B cell (primary cell): ENCODE measurements at regions of chr5 and their contacts with region 1.

Region 1: GRCh38 chr5:132829742-132830435 is 558 bp downstream of the SHROOM1 start:
- DNase-seq: peak; percentile 86
- ATAC-seq: peak; percentile 89
- H3K4me3 ChIP-seq: peak overlapping the region in 4 of 5 experiments; percentile 35 to 73 (median 57)
- H3K4me3 Mint-ChIP-seq: peak overlapping the region; percentile 93
- H3K27ac ChIP-seq: no peak overlapping the region
- H3K27ac Mint-ChIP-seq: peak overlapping the region; percentile 71
- H3K4me1 ChIP-seq: peaks cover 21 to 27% of the 10 kb centered on the region in 2 donors
- H3K4me1 Mint-ChIP-seq: peaks cover 18% of the 10 kb centered on the region
- H3K27me3 ChIP-seq: peaks cover 0 to 54% (median 32%) of the 10 kb centered on the region in 4 experiments
- H3K27me3 Mint-ChIP-seq: peaks cover 26% of the 10 kb centered on the region
- CTCF ChIP-seq: peak; percentile 93

Region 2: DNA sequence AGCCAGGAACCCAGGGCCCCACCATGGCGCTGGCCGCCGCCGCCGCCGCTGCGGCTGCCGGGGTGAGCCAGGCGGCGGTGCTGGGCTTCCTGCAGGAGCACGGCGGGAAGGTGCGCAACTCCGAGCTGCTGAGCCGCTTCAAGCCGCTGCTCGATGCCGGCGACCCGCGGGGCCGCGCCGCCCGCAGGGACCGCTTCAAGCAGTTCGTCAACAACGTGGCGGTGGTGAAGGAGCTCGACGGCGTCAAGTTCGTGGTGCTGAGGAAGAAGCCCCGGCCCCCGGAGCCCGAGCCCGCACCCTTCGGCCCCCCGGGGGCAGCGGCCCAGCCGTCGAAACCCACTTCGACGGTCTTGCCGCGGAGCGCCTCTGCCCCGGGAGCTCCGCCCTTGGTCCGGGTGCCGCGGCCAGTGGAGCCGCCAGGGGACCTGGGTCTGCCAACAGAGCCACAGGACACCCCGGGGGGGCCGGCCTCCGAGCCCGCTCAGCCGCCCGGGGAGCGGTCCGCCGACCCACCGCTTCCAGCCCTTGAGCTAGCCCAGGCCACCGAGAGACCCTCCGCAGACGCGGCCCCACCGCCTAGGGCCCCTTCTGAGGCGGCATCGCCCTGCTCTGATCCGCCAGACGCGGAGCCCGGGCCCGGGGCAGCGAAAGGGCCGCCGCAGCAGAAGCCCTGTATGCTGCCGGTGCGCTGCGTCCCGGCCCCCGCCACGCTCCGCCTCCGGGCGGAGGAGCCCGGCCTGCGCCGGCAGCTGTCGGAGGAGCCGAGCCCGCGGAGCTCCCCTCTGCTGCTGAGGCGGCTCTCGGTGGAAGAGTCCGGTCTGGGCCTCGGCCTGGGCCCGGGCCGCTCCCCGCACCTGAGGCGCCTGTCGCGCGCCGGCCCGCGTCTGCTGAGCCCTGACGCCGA is 16.0 kb before region 1 on chr5:
- CTCF ChIA-PET with region 1: interaction called, 41 read pairs
- POLR2A ChIA-PET with region 1: no interaction called
- intact Hi-C with region 1: no loop called
- DNase-seq: peak; percentile 70
- ATAC-seq: peak; percentile 48
- H3K4me3 ChIP-seq: peak overlapping the region in 3 of 5 experiments; percentile 30 to 50 (median 38)
- H3K4me3 Mint-ChIP-seq: no peak overlapping the region
- H3K27ac ChIP-seq: no peak overlapping the region
- H3K27ac Mint-ChIP-seq: no peak overlapping the region
- H3K4me1 ChIP-seq: peaks cover 10 to 16% of the 10 kb centered on the region in 2 donors
- H3K4me1 Mint-ChIP-seq: peaks cover 11% of the 10 kb centered on the region
- H3K27me3 ChIP-seq: peaks cover 0 to 47% (median 26%) of the 10 kb centered on the region in 4 experiments
- H3K27me3 Mint-ChIP-seq: peaks cover 36% of the 10 kb centered on the region
- CTCF ChIP-seq: no peak

Region 3: DNA sequence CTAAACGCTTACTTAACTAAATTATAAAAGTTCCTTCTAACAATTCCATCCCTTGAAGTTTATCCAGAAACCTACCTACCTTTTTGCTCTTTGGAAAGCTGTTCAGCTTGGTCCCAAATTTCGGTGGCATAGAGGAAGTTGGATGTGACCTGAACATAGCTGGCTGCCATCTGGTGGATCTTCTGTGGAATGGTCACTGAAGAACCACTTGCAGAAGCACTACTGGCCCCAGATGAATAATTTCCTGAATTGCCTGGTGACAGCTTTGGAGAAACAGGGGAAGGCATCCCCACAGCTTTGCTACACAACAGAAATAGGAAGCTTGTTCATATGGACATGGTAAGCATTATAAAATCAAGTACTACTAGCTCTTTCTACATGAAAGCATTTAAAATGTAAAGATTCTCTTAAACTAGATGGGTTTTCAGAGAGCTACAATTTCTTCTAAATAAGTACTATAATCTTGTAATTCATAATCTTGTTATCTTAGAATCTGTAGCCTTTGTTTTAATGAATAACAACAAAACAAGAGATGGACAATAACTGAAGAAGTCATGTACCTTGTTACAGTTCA is 53.5 kb after region 1 on chr5:
- CTCF ChIA-PET with region 1: interaction called, 75 read pairs
- POLR2A ChIA-PET with region 1: interaction called, 3 read pairs
- intact Hi-C with region 1: loop called (anchors 1 kb)
- DNase-seq: peak; percentile 69
- ATAC-seq: peak; percentile 53
- H3K4me3 ChIP-seq: no peak overlapping the region
- H3K4me3 Mint-ChIP-seq: no peak overlapping the region
- H3K27ac ChIP-seq: no peak overlapping the region
- H3K27ac Mint-ChIP-seq: no peak overlapping the region
- H3K4me1 ChIP-seq: no peaks in the 10 kb centered on the region
- H3K4me1 Mint-ChIP-seq: peaks cover 8% of the 10 kb centered on the region
- H3K27me3 ChIP-seq: no peaks in the 10 kb centered on the region
- H3K27me3 Mint-ChIP-seq: no peaks in the 10 kb centered on the region
- CTCF ChIP-seq: peak; percentile 78

Region 4: DNA sequence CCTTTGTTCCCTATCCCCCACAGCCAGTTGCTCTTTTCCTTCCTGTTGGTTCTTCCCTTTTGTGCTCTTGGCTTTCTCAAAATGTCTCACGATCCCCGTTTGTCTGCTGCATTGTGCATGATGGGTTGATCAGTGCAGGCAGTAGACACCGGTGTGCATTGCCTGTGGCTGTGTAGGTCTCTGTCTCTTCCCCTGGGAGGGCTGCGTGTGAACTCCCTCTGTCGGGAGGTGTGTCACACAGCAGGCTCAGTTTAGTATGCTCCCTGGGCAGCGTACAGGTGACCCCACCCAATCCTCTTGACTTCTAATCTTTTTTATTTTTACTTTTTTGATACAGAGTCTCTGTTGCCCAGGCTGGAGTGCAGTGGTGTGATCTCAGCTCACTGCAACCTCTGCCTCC is 517.1 kb after region 1 on chr5:
- CTCF ChIA-PET with region 1: no interaction called
- POLR2A ChIA-PET with region 1: no interaction called
- intact Hi-C with region 1: loop called (anchors 5 kb)
- DNase-seq: no peak
- ATAC-seq: no peak
- H3K4me3 ChIP-seq: no peak overlapping the region
- H3K4me3 Mint-ChIP-seq: no peak overlapping the region
- H3K27ac ChIP-seq: no peak overlapping the region
- H3K27ac Mint-ChIP-seq: no peak overlapping the region
- H3K4me1 ChIP-seq: no peaks in the 10 kb centered on the region
- H3K4me1 Mint-ChIP-seq: no peaks in the 10 kb centered on the region
- H3K27me3 ChIP-seq: peaks cover 0 to 2% (median under 1%) of the 10 kb centered on the region in 4 experiments
- H3K27me3 Mint-ChIP-seq: peaks cover 35% of the 10 kb centered on the region
- CTCF ChIP-seq: no peak